ENCODE measurements at regions of chr20 and their contacts with region 1.

Region 1: GRCh38 chr20:37319235-37319671 is 26.7 kb upstream of the SRC start:
- DNase-seq: no peak
- H3K4me3 ChIP-seq: no peak overlapping the region
- CTCF ChIP-seq: no peak
- POLR2A ChIP-seq: no peak

Region 2: DNA sequence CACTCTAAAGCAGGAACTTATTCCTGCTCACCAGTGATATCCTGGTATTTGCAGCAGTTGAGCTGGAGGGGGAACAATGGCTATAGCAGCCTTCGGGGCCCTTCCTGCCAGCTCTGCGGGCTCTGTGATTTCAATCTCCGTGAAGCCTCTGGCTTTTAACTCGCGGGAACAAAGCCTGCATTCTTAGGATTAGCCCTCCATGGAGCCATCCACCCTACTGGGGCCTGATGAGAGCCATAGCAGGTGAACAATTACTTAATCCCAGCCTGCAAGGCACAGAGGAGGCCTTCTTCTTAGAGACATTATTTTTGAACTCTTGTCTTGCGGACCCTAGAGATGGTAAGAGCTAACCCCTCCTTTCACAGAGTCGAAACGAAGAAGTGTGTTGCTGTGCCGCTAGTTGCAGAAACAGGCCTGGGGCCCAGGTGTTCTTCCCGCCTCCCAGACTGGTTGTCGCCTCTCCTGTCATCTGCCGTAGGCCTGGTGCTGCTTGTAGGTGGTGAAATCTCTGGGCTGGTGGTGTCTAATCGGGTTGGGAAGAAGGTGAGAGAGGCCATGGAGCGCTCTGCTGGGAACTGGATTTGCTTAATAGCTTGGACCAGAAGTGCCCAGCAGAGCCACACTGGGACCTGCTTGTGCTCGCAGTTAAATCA is 67.3 kb before region 1 on chr20:
- intact Hi-C with region 1: no loop called
- DNase-seq: no peak
- H3K4me3 ChIP-seq: no peak overlapping the region
- CTCF ChIP-seq: no peak
- POLR2A ChIP-seq: no peak

Region 3: GRCh38 chr20:37339224-37339623 is 20.0 kb after region 1 on chr20:
- intact Hi-C with region 1: loop called (anchors 1 kb)
- DNase-seq: no peak
- H3K4me3 ChIP-seq: no peak overlapping the region
- CTCF ChIP-seq: no peak
- POLR2A ChIP-seq: no peak

Measured in lower leg skin (tissue), 4 donors.